A549 (cell line): ENCODE measurements at regions of chr1 and their contacts with region 1.

Region 1: GRCh38 chr1:44819608-44820327 is 11.4 kb downstream of the BTBD19 start:
- DNase-seq: peak; percentile 74 to 94
- ATAC-seq: peak; percentile 90 to 91
- H3K4me3 ChIP-seq: peak overlapping the region; percentile 51
- H3K27ac ChIP-seq: peak overlapping the region; percentile 97 to 98
- H3K4me1 ChIP-seq: peaks cover 12% of the 10 kb centered on the region; the same call in 2 of the 3 replicates
- CTCF ChIP-seq: no peak; the same call in 2 of the 3 replicates
- EP300 ChIP-seq: no peak
- POLR2A ChIP-seq: peak; percentile 93
- RAD21 ChIP-seq: peak; percentile 2 to 41; a peak in 3 of 5 replicates

Region 2: GRCh38 chr1:44721485-44722361 is 98.0 kb before region 1 on chr1:
- CTCF ChIA-PET with region 1: no interaction called
- POLR2A ChIA-PET with region 1: interaction called, 21 read pairs
- DNase-seq: peak; percentile 93 to 95
- ATAC-seq: peak; percentile 96 to 98
- H3K4me3 ChIP-seq: no peak overlapping the region
- H3K27ac ChIP-seq: peak overlapping the region; percentile 84 to 90
- H3K4me1 ChIP-seq: peaks cover 8% of the 10 kb centered on the region; the same call in 1 of the 3 replicates
- CTCF ChIP-seq: no peak
- EP300 ChIP-seq: 0 out of 5 replicates have a peak, but pooled peaks of 1 of the 2 experiments have one; percentile 20
- POLR2A ChIP-seq: peak; percentile 100
- RAD21 ChIP-seq: no peak

Region 3: GRCh38 chr1:44786138-44786840 is 33.5 kb before region 1 on chr1:
- CTCF ChIA-PET with region 1: interaction called, 23 read pairs
- POLR2A ChIA-PET with region 1: interaction called, 6 read pairs
- DNase-seq: peak; percentile 75 to 77
- ATAC-seq: peak; percentile 63 to 70
- H3K4me3 ChIP-seq: peak overlapping the region; percentile 49
- H3K27ac ChIP-seq: peak overlapping the region; percentile 89 to 93
- H3K4me1 ChIP-seq: peaks cover 6% of the 10 kb centered on the region
- CTCF ChIP-seq: peak; percentile 76
- EP300 ChIP-seq: no peak
- POLR2A ChIP-seq: peak; percentile 40
- RAD21 ChIP-seq: peak; percentile 68 to 74

Region 4: GRCh38 chr1:44792783-44793714 is 26.7 kb before region 1 on chr1:
- CTCF ChIA-PET with region 1: interaction called, 41 read pairs
- POLR2A ChIA-PET with region 1: interaction called, 10 read pairs
- DNase-seq: no peak
- ATAC-seq: peak in 1 of 2 experiments; percentile 6; a peak in 3 of 6 replicates
- H3K4me3 ChIP-seq: no peak overlapping the region
- H3K27ac ChIP-seq: 0 out of 6 replicates have a peak overlapping the region, but pooled peaks of 1 of the 2 experiments have one; percentile 32
- H3K4me1 ChIP-seq: no peaks in the 10 kb centered on the region
- CTCF ChIP-seq: no peak
- EP300 ChIP-seq: no peak
- POLR2A ChIP-seq: no peak
- RAD21 ChIP-seq: no peak

Region 5: DNA sequence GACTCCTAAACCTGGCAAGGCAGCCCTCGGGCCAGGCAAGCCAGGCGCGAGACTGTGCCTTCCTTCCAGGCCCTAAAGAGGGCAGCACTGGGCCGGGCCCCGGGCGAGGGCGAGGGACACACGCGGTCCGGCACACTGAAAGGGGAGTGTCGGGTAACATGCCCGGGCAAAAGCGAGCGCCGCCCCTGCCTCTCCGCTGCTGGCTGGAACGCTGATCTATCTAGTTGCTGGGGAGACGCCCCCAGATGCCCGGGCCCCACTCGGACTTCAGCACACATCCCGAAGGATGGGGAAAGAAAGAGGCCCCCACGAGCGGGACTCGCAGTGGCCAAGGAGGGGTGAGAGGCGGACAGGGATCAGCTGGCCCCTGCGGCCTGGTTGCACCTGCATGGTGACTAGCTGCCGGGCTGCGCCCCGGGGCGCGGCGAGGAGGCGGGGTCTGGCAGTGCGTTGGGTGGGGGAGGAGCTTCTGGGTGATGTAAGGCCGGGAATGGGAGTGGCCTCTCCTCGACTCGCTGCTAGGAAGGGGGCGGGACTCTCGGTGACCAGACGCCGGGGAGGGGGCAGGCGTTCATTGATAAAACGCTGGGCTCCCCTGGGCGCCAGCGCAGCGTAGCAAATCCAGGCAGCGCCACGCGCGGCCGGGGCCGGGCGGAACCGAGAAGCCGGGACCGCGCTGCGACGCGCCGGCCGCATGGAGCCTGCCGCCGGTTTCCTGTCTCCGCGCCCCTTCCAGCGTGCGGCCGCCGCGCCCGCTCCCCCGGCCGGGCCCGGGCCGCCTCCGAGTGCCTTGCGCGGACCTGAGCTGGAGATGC is 19.8 kb before region 1 on chr1 and contains the start of gene PLK3:
- CTCF ChIA-PET with region 1: interaction called, 41 read pairs
- POLR2A ChIA-PET with region 1: interaction called, 47 read pairs
- DNase-seq: peak; percentile 79 to 96
- ATAC-seq: peak; percentile 88 to 91
- H3K4me3 ChIP-seq: peak within 1 kb of the TSS; percentile 98
- H3K27ac ChIP-seq: peak within 1 kb of the TSS; percentile 91 to 95
- H3K4me1 ChIP-seq: peaks cover 34% of the 10 kb centered on the region
- CTCF ChIP-seq: peak; percentile 64
- EP300 ChIP-seq: no peak
- POLR2A ChIP-seq: peak; percentile 85
- RAD21 ChIP-seq: peak; percentile 68 to 76
- polyA plus RNA-seq, gene PLK3: 12.6 and 16.0 TPM in 2 replicates

Region 6: GRCh38 chr1:44807262-44808062 is 12.3 kb before region 1 on chr1 and contains the start of gene DYNLT4:
- CTCF ChIA-PET with region 1: interaction called, 21 read pairs
- POLR2A ChIA-PET with region 1: interaction called, 57 read pairs
- DNase-seq: peak; percentile 90 to 97
- ATAC-seq: peak; percentile 77 to 80
- H3K4me3 ChIP-seq: 0 out of 3 replicates have a peak within 1 kb of the TSS, but pooled peaks have one; percentile 14
- H3K27ac ChIP-seq: peak within 1 kb of the TSS; percentile 98 to 99
- H3K4me1 ChIP-seq: peaks cover 80% of the 10 kb centered on the region
- CTCF ChIP-seq: no peak
- EP300 ChIP-seq: peak in 1 of 2 experiments; percentile 64; a peak in 2 of 5 replicates
- POLR2A ChIP-seq: peak; percentile 22; the same call in 1 of the 2 replicates
- RAD21 ChIP-seq: no peak; a peak in 1 of 5 replicates
- polyA plus RNA-seq, gene DYNLT4: 0.21 TPM in 1 of 2 replicates, not detected in the other

Region 7: DNA sequence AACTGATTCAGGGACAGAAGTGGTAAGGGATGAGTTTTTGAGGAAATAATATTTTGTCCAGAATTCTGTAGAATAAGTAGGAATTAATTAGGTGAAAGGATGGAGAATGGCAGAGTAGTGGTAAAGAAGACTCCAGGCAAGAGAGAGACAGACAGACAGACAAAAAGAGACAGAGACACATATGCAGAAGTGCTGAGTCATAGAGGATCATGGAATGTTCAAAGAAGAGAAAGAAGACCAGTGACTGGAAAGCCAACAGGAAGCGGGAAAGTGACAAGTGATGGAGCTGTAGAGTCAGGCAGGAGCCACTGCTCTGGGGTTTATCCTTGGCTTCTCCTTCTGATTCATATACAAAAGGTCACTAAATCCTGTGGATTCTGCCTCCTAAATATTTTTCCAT is 278.2 kb after region 1 on chr1:
- CTCF ChIA-PET with region 1: no interaction called
- POLR2A ChIA-PET with region 1: no interaction called
- DNase-seq: peak in 1 of 2 experiments; percentile 28
- ATAC-seq: no peak
- H3K4me3 ChIP-seq: no peak overlapping the region
- H3K27ac ChIP-seq: peak overlapping the region; percentile 23 to 68; a peak in 4 of 6 replicates
- H3K4me1 ChIP-seq: peaks cover 5% of the 10 kb centered on the region; the same call in 2 of the 3 replicates
- CTCF ChIP-seq: no peak
- EP300 ChIP-seq: no peak
- POLR2A ChIP-seq: no peak
- RAD21 ChIP-seq: no peak